B cell (primary cell): ENCODE measurements at regions of chr16 and their contacts with region 1.

Region 1: GRCh38 chr16:84065536-84066132 is 23.0 kb upstream of the SLC38A8 start:
- DNase-seq: peak; percentile 37
- ATAC-seq: peak; percentile 45
- H3K4me3 ChIP-seq: no peak overlapping the region
- H3K4me3 Mint-ChIP-seq: no peak overlapping the region
- H3K27ac ChIP-seq: no peak overlapping the region
- H3K27ac Mint-ChIP-seq: no peak overlapping the region
- H3K4me1 ChIP-seq: no peaks in the 10 kb centered on the region
- H3K4me1 Mint-ChIP-seq: no peaks in the 10 kb centered on the region
- H3K27me3 ChIP-seq: no peaks in the 10 kb centered on the region
- H3K27me3 Mint-ChIP-seq: no peaks in the 10 kb centered on the region
- CTCF ChIP-seq: peak; percentile 71

Region 2: DNA sequence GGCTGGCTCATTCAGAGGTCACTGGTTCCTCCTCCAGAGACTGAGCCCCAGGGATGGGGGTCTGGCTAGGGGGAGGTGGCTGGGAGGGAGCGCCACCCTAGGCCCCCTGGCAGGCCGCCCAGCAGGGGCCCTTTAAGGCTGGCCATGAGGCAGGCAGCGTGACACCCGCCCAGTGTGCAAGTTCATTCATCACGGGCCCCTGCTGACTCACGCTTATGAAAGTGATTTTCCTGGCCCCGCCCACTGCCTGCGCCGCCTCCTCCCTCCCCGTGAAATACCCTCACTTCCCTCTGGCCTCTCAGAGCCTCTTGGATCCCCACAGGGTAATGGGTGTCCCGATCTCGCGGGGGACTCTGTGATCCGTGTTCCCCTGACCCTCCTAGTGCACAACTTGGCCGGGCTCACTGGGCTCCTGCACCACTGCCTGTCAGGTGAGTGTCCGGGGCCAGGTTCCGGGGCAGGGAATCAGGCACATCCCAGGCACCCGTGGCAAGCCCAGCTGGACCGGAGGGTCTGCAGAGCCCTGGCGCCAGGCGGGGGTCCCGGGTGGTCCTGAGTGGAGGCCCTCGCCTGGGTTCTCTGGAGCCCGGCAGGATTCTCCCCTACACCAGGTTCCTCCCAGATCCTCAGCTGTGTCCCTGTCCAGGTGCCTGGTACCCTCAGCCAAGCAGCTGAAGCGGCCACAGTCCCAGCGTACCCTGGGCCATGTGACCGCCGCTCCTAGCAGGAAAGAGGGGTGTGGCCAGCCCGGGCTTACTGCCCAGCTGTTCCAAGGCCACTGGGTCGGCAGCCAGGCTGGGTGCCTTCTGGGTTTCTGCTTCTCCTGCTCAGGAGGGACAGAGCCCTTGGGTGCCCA is 112.5 kb before region 1 on chr16 and contains the start of gene OSGIN1:
- CTCF ChIA-PET with region 1: interaction called, 16 read pairs
- POLR2A ChIA-PET with region 1: no interaction called
- intact Hi-C with region 1: loop called (anchors 5 kb)
- DNase-seq: peak; percentile 52
- ATAC-seq: peak; percentile 81
- H3K4me3 ChIP-seq: peak within 1 kb of the TSS in 2 of 5 experiments; percentile 19 to 35
- H3K4me3 Mint-ChIP-seq: peak within 1 kb of the TSS; percentile 76
- H3K27ac ChIP-seq: no peak within 1 kb of the TSS
- H3K27ac Mint-ChIP-seq: no peak within 1 kb of the TSS
- H3K4me1 ChIP-seq: peaks cover 12 to 13% of the 10 kb centered on the region in 2 donors
- H3K4me1 Mint-ChIP-seq: peaks cover 12% of the 10 kb centered on the region
- H3K27me3 ChIP-seq: peaks cover 0 to 44% (median 10%) of the 10 kb centered on the region in 4 experiments
- H3K27me3 Mint-ChIP-seq: peaks cover 17% of the 10 kb centered on the region
- CTCF ChIP-seq: no peak
- total RNA-seq, gene OSGIN1: 1.2 and 1.8 TPM in 2 replicates

Region 3: DNA sequence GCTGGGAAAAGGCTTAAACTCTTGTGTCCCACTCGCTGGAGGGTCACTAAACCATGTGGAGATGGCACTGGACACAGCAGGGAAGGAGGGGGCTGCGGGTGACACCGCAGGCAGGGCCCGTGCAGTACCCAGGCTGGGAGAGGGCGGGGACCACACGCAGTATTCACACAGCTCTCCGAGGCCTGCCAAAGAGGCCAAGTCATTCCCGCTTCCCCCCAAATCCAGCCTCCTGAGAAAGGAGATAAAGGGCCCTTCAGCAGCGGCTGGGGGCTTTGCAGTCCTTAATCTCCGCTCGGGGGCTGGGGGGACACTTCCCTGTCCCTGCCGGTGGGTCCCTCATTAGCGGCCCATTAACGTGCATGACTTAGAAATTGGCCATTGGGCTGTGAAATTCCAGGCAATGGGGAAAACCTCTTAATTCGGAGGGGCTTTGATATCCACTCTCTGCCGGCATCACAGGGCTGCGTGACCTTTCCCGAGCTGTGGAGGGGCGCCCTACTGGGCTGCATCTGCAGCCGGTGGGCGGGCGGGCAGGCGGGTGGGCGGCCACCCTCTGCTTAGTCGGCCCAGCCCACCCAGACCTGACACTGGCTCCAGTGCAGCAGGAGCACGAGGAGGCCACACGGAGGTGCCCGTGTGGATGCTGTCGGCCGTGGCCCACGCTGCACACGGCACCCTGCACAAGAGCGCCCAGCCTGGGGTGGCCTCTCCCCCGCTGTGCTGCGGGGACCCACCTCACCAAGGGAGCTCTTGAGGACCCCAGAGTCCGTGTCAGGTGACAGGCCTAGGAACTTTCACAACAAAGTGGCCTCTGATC is 20.4 kb before region 1 on chr16:
- CTCF ChIA-PET with region 1: interaction called, 12 read pairs
- POLR2A ChIA-PET with region 1: no interaction called
- intact Hi-C with region 1: no loop called
- DNase-seq: no peak
- ATAC-seq: no peak
- H3K4me3 ChIP-seq: no peak overlapping the region
- H3K4me3 Mint-ChIP-seq: no peak overlapping the region
- H3K27ac ChIP-seq: no peak overlapping the region
- H3K27ac Mint-ChIP-seq: no peak overlapping the region
- H3K4me1 ChIP-seq: no peaks in the 10 kb centered on the region
- H3K4me1 Mint-ChIP-seq: no peaks in the 10 kb centered on the region
- H3K27me3 ChIP-seq: peaks cover 0 to 23% (median 3%) of the 10 kb centered on the region in 4 experiments
- H3K27me3 Mint-ChIP-seq: peaks cover 24% of the 10 kb centered on the region
- CTCF ChIP-seq: no peak

Region 4: DNA sequence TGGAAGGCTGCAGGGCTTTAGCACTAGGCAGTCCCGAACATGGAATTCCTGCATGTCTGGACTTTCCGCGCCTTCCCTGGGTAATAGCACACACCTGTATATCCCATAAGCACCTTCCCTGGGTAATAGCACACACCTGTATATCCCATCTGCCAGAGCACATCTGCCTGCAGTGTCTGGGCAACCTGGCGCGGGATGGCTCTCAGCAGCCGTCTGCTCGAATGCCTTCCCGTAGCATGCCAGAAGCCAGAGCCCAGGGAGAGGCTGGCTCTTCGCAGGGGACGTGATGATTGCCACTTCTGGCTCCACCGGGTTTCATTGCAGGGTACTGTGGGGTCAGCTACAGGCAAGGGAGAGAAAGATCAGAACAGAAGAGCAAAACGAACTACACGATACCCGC is 29.8 kb after region 1 on chr16:
- CTCF ChIA-PET with region 1: no interaction called
- POLR2A ChIA-PET with region 1: no interaction called
- intact Hi-C with region 1: no loop called
- DNase-seq: no peak
- ATAC-seq: no peak
- H3K4me3 ChIP-seq: no peak overlapping the region
- H3K4me3 Mint-ChIP-seq: no peak overlapping the region
- H3K27ac ChIP-seq: no peak overlapping the region
- H3K27ac Mint-ChIP-seq: no peak overlapping the region
- H3K4me1 ChIP-seq: no peaks in the 10 kb centered on the region
- H3K4me1 Mint-ChIP-seq: no peaks in the 10 kb centered on the region
- H3K27me3 ChIP-seq: no peaks in the 10 kb centered on the region
- H3K27me3 Mint-ChIP-seq: no peaks in the 10 kb centered on the region
- CTCF ChIP-seq: no peak